ENCODE measurements at regions of chr7 and their contacts with region 1.

Region 1: DNA sequence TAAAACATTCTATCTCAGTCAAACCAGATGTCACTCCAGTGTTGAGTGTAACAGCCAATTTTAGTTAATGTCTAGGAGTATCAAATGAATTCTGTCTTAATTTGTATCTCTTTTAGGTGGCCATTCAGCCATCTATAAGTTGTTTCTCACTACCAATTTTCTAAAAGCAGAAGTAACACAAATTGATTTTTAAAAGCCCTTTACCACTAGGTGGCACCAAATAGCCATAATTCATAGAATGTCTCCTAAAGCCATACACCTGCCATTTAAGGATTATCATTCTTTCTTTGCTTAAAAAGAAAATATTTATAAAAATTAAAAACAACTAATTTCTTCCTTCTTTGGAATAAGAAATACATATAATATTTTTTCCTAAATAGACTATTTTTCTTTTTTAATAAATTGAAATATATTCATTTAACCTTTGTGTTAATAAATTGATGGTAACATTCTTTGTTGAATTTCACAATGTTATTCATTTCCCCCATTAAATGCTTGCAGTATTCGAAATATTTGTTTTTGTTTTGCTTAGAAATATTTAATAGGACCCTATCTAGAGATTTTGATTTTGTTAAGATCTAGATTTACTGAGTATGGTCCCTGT is 107.8 kb upstream of the PPP1R3A start:
- DNase-seq: peak; percentile 79
- H3K4me3 ChIP-seq: no peak overlapping the region
- H3K27ac ChIP-seq: no peak overlapping the region
- H3K4me1 ChIP-seq: no peaks in the 10 kb centered on the region
- CTCF ChIP-seq: peak; percentile 83

Region 2: GRCh38 chr7:113968713-113969112 is 57.9 kb before region 1 on chr7:
- CTCF ChIA-PET with region 1: no interaction called
- POLR2A ChIA-PET with region 1: no interaction called
- intact Hi-C with region 1: no loop called
- DNase-seq: no peak
- H3K4me3 ChIP-seq: no peak overlapping the region
- H3K27ac ChIP-seq: no peak overlapping the region
- H3K4me1 ChIP-seq: no peaks in the 10 kb centered on the region
- CTCF ChIP-seq: no peak

Region 3: GRCh38 chr7:114217026-114217425 is 190.4 kb after region 1 on chr7:
- CTCF ChIA-PET with region 1: no interaction called
- POLR2A ChIA-PET with region 1: no interaction called
- intact Hi-C with region 1: no loop called
- DNase-seq: no peak
- H3K4me3 ChIP-seq: no peak overlapping the region
- H3K27ac ChIP-seq: no peak overlapping the region
- H3K4me1 ChIP-seq: no peaks in the 10 kb centered on the region
- CTCF ChIP-seq: peak; percentile 33

Region 4: GRCh38 chr7:114414156-114415063 is 387.8 kb after region 1 on chr7 and contains the start of gene FOXP2:
- CTCF ChIA-PET with region 1: no interaction called
- POLR2A ChIA-PET with region 1: no interaction called
- intact Hi-C with region 1: loop called (anchors 10 kb)
- DNase-seq: no peak
- H3K4me3 ChIP-seq: no peak within 1 kb of the TSS
- H3K27ac ChIP-seq: no peak within 1 kb of the TSS
- H3K4me1 ChIP-seq: no peaks in the 10 kb centered on the region
- CTCF ChIP-seq: no peak
- total RNA-seq, gene FOXP2: not detected in 2 replicates

Region 5: GRCh38 chr7:115910541-115911164 is 1884.1 kb after region 1 on chr7:
- CTCF ChIA-PET with region 1: no interaction called
- POLR2A ChIA-PET with region 1: no interaction called
- intact Hi-C with region 1: loop called (anchors 10 kb)
- DNase-seq: peak; percentile 33
- H3K4me3 ChIP-seq: no peak overlapping the region
- H3K27ac ChIP-seq: no peak overlapping the region
- H3K4me1 ChIP-seq: no peaks in the 10 kb centered on the region
- CTCF ChIP-seq: peak; percentile 82